Psoas muscle (tissue), 8 donors: ENCODE measurements at regions of chr3 and their contacts with region 1.

Region 1: DNA sequence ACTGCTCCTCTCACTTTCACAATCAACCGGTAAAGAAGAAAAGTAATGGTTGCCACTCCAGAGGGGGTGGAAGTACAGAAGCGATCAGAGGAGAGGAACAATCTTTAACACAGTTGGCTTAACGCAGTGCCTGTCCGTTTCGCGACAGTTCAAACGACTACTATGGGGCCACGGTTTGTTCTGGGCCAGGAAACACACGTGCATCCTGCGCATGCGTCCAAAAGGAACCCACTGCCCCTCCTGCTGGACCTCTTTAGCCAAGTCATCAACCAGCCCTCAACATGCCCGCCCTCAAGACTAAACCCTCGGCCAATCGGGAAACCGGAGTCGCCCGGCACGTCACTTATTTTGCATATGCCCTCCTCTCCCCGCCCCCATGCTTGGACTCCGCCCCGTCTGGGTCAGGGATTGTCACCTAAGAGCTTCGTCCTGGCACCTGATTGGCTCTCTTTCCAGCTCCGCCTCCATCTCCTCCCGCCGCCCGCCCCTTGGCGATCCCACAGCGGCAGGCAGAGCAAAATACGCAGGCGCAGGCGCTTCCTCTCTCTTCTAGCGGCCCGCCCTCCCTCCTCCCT is 345 bp upstream of the CDV3 start:
- DNase-seq: peak; percentile 100
- ATAC-seq: peak; percentile 91 to 94 (median 92)
- H3K4me3 ChIP-seq: peak overlapping the region; percentile 93
- H3K27ac ChIP-seq: peak overlapping the region; percentile 99
- H3K4me1 ChIP-seq: peaks cover 31% of the 10 kb centered on the region
- H3K27me3 ChIP-seq: no peaks in the 10 kb centered on the region
- CTCF ChIP-seq: no peak

Region 2: DNA sequence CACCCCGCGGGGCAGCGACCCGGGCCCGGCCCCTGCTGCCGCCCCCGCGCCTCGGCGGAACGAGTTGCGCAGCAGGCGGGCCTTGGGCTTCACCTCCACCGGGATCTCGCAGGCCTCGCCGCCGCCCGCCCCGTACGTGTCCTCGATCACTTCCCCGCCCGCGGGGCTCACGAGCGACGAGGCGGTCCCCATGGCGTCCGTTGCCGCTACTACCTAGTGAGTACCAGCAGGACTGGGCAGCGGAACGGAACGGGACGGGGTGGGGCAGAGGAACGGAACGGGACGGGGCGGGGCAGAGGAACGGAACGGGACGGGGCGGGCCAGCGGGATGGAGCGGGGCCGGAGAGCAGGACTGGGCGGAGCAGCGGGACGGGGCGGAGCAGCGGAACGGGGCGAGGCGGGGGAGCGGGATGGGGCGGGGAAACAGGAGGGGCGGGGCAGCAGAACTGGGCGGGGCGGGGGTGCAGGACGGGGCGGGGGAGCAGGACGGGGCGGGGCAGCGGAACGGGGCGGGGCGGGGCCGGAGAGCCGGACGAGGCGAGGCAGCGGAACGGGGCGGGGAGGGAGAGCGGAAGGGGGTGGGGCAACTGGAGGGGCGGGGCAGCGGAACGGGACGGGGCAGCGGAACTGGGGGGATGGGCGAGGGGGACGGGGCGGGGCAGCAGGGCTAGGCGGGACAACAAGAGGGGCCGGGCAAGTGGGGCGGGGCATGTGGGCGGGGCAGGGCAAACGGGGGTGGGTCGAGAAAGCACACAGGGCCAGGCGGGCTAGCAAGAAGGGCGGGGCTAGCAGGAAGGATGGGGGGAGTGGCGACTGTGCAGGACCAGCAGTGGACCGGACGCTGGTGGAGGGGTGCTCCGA is 850.7 kb before region 1 on chr3 and contains the start of gene NPHP3:
- intact Hi-C with region 1: loop called (anchors 2 to 5 kb)
- DNase-seq: peak; percentile 98 to 99
- ATAC-seq: peak; percentile 88 to 93 (median 92)
- H3K4me3 ChIP-seq: peak within 1 kb of the TSS; percentile 79
- H3K27ac ChIP-seq: peak within 1 kb of the TSS; percentile 91
- H3K4me1 ChIP-seq: peaks cover 30% of the 10 kb centered on the region
- H3K27me3 ChIP-seq: no peaks in the 10 kb centered on the region
- CTCF ChIP-seq: no peak
- total RNA-seq, gene NPHP3: 6.9 to 9.1 (median 8.1) TPM

Region 3: DNA sequence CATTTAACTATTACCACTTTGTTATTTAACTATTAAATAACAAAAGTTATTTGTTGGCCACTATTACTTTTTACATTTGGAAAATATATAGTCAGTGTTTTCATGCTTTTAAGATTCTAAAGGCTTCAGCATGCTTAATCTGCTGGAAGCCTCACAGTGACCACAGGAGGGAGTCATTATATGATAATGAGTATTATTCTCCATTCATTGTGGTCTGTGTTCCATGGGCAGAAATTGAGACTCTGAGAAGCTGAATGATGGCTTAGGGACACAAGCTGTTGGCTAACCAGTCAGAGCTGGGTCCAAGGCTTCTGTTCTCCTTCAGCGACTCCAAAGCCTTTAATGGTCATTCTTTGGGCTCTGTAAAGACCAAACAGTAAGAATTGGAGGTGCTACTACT is 108.6 kb before region 1 on chr3:
- intact Hi-C with region 1: loop called (anchors 5 kb)
- DNase-seq: no peak
- ATAC-seq: no peak
- H3K4me3 ChIP-seq: no peak overlapping the region
- H3K27ac ChIP-seq: no peak overlapping the region
- H3K4me1 ChIP-seq: peaks cover 32% of the 10 kb centered on the region
- H3K27me3 ChIP-seq: no peaks in the 10 kb centered on the region
- CTCF ChIP-seq: no peak

Region 4: DNA sequence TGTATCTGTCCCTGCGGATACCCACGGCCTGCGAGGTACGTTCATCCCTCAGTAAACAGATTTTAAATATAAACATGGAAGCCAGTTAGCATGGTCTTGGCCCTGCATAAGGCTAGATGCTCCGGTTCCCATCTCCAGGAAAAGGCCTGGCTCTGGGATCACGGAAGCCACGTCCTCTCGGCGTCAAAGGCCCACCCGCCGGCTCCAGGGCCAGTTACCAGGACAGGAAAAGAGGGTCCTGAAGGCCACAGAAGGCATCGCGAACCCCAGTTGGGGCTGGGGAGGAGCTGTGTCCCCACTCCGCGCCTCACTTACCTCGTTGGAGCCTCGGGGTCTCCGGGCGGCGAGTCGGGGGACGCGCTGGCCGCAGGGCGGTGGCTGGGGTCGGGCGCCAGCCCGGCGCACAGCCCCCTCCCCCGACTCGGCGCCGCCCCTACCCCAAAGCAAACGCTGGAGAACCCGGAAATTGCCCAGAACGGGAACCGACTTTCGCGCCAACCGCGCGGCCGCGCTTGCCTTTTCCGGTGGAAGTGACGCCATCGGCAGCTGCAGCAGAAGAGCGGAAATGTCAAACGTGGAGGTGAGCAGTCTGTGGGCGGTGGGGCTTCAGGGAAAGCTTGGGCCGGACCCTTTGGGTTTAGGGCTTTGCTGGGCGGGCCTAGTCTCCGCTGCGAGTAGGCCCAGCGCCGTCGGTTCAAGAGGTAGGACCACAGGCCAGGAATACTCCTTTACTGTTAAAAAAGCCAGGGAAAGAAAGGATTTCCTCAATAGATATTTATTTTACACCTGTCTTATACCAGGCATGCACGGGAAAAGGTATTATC is 88.5 kb after region 1 on chr3 and contains the start of gene TOPBP1:
- intact Hi-C with region 1: no loop called
- DNase-seq: peak; percentile 80 to 88
- ATAC-seq: peak; percentile 90 to 98 (median 92)
- H3K4me3 ChIP-seq: peak within 1 kb of the TSS; percentile 85
- H3K27ac ChIP-seq: peak within 1 kb of the TSS; percentile 86
- H3K4me1 ChIP-seq: peaks cover 12% of the 10 kb centered on the region
- H3K27me3 ChIP-seq: no peaks in the 10 kb centered on the region
- CTCF ChIP-seq: no peak
- total RNA-seq, gene TOPBP1: 6.7 to 10.5 (median 8.4) TPM